ENCODE measurements at regions of chr5 and their contacts with region 1.

Region 1: DNA sequence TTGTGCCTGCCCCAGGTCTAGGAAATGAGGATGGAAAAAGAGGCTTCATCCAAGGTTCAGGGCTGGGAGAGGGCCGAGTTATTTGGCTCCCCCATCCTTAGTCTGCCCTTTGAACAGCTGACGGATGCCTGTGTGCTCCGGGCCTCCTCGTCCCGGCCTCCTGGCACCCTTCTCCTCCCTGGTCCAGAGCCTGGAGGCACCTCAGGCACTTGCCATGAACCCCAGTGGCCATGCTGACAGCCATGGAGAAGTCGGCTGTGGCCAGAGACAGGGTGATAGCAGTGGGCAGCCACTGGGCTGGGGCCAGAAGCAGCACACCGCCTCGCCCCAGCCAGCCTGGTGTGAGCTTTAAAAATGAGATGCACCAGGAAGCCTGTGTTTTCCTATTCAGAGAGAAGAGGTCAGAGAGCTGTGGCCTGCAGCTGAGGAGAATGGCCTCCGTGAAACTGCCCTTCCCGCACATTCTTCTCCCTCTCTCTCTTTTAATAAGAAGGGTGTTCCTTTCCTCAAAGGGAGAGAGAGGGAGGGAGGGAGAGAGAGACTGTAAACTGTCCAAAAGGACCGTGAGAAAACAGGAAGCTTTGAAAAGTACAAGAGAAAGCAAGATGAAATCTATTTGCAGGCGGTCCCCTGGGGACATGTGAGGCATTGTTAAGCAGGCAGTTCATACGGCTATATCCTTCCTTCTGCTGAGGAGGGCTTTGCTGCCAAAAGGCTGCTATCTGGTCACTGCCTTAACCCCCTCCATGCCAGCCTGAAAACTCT is 55.3 kb downstream of the ZNF366 start:
- DNase-seq: peak; percentile 77 to 85
- ATAC-seq: peak; percentile 67 to 84 (median 78)
- H3K4me3 ChIP-seq: no peak overlapping the region
- H3K27ac ChIP-seq: peak overlapping the region; percentile 94
- H3K4me1 ChIP-seq: peaks cover 31% of the 10 kb centered on the region
- H3K27me3 ChIP-seq: no peaks in the 10 kb centered on the region
- CTCF ChIP-seq: no peak

Region 2: GRCh38 chr5:72378636-72379290 is 73.2 kb before region 1 on chr5:
- intact Hi-C with region 1: loop called in 1 of 2 experiments (anchors 5 kb)
- DNase-seq: peak; percentile 34 to 62
- ATAC-seq: peak; percentile 76 to 83 (median 78)
- H3K4me3 ChIP-seq: no peak overlapping the region
- H3K27ac ChIP-seq: peak overlapping the region; percentile 83
- H3K4me1 ChIP-seq: peaks cover 44% of the 10 kb centered on the region
- H3K27me3 ChIP-seq: no peaks in the 10 kb centered on the region
- CTCF ChIP-seq: no peak

Region 3: DNA sequence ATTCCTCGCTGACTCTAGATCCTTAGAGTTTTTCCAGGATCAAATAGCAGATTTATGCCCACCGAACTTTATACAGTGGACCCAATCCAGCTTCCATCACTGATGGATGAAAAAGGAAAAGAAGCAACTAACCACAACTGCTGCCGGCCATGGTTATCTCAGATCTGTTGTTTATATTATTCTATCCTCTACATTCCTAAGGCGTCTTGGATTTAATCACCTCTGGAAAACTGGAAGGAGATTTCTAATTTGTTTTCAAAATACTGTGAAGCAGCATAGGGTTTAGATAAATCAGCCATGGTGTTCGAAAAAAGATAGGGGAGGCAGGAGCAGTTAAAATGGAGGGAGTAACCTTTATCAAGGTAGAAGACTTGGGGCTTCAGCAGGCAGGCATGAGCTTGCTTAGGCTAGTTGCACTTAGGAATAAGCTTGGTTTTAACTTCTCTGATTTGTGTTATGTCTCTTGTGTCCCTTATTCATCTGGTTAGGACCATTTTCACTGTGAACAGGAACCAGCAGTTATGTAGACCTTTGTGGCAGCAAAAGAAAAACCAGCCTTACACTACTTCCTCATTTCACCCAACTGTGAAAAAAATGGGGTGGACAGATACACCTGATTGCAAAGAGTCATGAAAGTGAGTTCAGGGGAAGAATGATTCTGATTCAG is 56.1 kb after region 1 on chr5:
- intact Hi-C with region 1: loop called in 1 of 2 experiments (anchors 5 kb)
- DNase-seq: no peak
- ATAC-seq: no peak
- H3K4me3 ChIP-seq: peak overlapping the region; percentile 55
- H3K27ac ChIP-seq: peak overlapping the region; percentile 87
- H3K4me1 ChIP-seq: peaks cover 83% of the 10 kb centered on the region
- H3K27me3 ChIP-seq: no peaks in the 10 kb centered on the region
- CTCF ChIP-seq: no peak

Region 4: DNA sequence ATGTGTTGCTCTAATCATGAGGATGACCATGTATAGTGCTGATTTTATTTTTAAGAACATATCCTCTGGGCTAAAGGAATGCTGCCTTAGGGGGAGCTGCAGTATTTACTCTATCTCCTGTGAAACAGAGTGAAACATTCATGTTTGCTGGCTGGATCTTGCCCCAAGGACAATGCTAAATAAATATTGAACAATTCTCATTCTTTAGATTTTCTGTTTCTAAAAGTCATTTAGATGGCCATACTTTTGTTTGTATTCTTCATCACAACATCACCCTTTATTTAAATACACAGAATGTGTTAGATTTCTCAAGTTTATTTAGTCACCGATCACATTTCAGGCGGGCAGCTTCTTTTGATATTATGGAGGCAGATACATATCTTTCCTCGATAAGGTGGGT is 1277.4 kb after region 1 on chr5:
- intact Hi-C with region 1: no loop called
- DNase-seq: no peak
- ATAC-seq: no peak
- H3K4me3 ChIP-seq: no peak overlapping the region
- H3K27ac ChIP-seq: no peak overlapping the region
- H3K4me1 ChIP-seq: no peaks in the 10 kb centered on the region
- H3K27me3 ChIP-seq: no peaks in the 10 kb centered on the region
- CTCF ChIP-seq: no peak